ENCODE measurements at regions of chr3 and their contacts with region 1.

Region 1: DNA sequence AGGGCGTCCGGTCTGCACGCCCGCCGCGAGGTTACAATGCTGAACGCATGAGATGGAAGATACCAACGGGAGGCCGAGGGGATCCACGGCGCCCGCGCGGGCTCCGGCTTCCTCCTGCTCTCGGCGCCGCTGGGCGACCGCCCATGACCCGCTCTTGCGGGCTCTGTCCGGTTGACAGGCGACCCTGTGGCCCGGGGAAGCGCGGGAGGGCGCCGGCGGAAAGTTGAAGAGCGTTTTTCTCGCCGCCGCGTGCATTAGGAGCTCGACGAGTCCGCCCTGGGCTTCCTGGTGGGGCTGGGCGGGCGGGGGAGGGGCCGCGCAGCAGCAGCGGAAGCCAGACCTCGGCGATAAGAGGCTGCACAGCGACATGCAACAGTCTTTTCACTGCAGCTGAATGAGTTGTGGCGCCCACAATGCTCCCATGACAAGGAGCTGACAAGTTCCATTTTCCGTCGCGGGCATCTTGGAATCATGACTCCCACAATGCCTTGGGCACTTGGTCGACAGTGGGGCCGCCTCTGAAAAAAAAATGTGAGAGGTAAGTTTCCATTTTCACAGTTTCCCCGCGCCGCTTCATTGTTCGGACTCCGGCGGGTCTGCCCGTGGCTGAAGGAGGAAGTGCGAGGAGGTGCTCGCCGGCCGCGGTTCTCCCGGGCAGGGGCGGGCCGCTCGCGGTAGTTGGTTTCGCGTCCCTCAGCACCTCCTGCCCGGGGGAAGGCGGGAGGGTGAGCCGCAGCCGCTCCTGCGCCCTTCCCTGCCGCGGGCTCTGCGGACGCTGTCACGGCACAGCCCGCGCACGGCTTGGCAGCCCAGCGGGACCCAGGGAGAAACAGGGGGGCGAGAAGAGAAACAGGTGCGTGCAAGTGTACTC is at the start of gene MBNL1:
- DNase-seq: peak; percentile 83 to 89 (median 87)
- ATAC-seq: peak; percentile 26 to 81 (median 76)
- H3K4me3 ChIP-seq: peak within 1 kb of the TSS; percentile 66 to 93 (median 84)
- H3K27ac ChIP-seq: peak within 1 kb of the TSS; percentile 92 to 100 (median 99)
- H3K4me1 ChIP-seq: peaks cover 14 to 72% (median 48%) of the 10 kb centered on the region in 12 donors
- H3K27me3 ChIP-seq: no peaks in the 10 kb centered on the region
- CTCF ChIP-seq: no peak
- POLR2A ChIP-seq: peak in 1 of 2 donors; percentile 57
- total RNA-seq, gene MBNL1: 156 to 416 (median 193) TPM

Region 2: GRCh38 chr3:152183473-152183872 is 85.3 kb before region 1 on chr3:
- intact Hi-C with region 1: loop called in 3 of 10 experiments (anchors 5 to 10 kb)
- DNase-seq: peak in 4 of 5 donors; percentile 30 to 53 (median 39)
- ATAC-seq: peak; percentile 58 to 83 (median 66)
- H3K4me3 ChIP-seq: no peak overlapping the region
- H3K27ac ChIP-seq: no peak overlapping the region
- H3K4me1 ChIP-seq: peaks cover 0 to 10% (median 0%) of the 10 kb centered on the region in 12 donors
- H3K27me3 ChIP-seq: no peaks in the 10 kb centered on the region
- CTCF ChIP-seq: peak; percentile 45 to 78 (median 62)
- POLR2A ChIP-seq: no peak

Region 3: DNA sequence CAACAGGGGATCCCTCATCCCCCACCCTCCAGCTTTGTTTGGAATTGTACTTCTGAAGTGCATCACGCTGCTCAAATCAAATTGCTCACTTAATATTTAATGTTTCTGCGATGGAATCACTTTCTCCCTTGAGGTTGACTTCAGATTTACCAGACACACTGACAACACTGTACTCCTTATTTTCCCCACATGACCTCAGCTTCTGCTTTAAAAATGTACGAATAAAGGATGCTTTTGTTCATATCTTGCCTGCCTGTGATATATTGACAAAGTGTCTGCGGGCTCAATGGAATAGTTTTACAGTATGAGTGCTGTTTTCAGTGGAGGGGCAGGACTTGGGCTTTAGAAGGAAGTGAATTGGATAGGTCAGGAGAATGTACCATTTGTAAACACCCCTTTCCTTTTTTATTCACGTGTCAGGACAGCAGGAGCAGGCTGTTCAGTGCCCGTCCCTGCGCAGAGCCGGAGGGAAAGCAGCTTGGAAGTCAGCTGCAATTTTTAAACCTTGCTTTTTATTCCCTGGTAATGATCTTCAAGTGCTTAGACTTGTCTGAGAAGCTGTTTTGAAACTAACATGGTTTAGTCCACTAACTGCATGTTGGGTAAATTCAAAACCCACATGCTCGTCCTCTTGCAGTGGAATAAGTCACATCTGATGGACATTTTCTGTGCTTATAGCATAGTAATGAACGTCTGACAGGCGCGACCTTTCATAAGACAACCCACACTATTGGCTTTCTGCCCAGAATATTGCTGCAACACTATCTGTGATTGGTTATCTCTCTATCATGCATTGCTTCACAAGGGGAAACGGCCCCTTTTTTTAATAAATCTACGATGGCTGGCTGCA is 29.8 kb after region 1 on chr3:
- intact Hi-C with region 1: loop called in 3 of 10 experiments (anchors 2 to 5 kb)
- DNase-seq: peak; percentile 40 to 60 (median 52)
- ATAC-seq: peak; percentile 80 to 88 (median 84)
- H3K4me3 ChIP-seq: peak overlapping the region in 11 of 12 donors; percentile 16 to 59 (median 47)
- H3K27ac ChIP-seq: peak overlapping the region; percentile 35 to 91 (median 82)
- H3K4me1 ChIP-seq: peaks cover 7 to 99% (median 68%) of the 10 kb centered on the region in 12 donors
- H3K27me3 ChIP-seq: no peaks in the 10 kb centered on the region
- CTCF ChIP-seq: no peak
- POLR2A ChIP-seq: no peak

Region 4: DNA sequence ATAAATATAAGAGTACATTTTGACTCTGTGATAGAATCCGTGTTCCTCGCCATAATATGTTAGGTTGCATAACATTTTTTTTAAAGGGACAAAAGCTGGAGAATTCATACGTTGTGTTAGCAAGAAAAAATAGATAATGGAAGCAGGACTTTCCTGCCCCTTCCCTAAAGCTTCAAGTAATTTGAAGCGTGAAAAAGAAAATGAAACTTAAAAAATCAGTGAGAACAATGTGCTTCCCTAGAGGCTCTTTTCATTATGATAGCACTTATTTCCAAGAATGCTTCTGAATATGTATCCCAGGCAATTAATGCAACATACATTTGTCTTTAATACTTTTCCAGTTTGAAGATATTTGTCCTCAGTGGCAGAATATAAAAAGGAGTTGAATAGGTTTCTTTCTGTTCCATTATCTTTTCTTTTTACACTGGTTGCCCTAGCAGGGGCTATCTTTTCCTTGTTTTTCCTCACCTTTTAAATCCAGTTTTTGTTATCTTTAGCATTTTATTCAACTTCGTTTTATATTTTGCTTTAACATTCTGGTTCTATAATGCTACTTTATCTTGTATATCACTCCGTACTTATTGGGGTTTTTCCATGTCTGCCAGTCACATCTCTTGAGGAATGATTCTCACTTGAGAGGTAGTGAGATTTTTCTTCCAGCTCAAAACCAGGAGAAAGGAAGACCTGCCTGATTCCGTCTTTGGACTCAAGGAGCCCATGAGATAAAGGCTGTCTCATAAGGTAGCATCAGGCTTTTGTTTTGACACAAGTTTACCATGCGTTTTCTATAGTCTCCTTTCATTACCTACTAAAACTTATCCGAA is 113.7 kb after region 1 on chr3:
- intact Hi-C with region 1: loop called in 1 of 10 experiments (anchors 5 kb)
- DNase-seq: no peak
- ATAC-seq: peak in 2 of 4 donors; percentile 32 to 48
- H3K4me3 ChIP-seq: peak overlapping the region in 10 of 12 donors; percentile 3 to 54 (median 36)
- H3K27ac ChIP-seq: peak overlapping the region; percentile 23 to 81 (median 72)
- H3K4me1 ChIP-seq: peaks cover 14 to 98% (median 87%) of the 10 kb centered on the region in 12 donors
- H3K27me3 ChIP-seq: no peaks in the 10 kb centered on the region
- CTCF ChIP-seq: no peak
- POLR2A ChIP-seq: no peak

Region 5: GRCh38 chr3:152430223-152431002 is 161.6 kb after region 1 on chr3:
- intact Hi-C with region 1: loop called in 3 of 10 experiments (anchors 5 to 10 kb)
- DNase-seq: peak in 4 of 5 donors; percentile 39 to 78 (median 62)
- ATAC-seq: peak; percentile 89 to 98 (median 93)
- H3K4me3 ChIP-seq: no peak overlapping the region
- H3K27ac ChIP-seq: peak overlapping the region in 11 of 12 donors; percentile 27 to 72 (median 60)
- H3K4me1 ChIP-seq: peaks cover 0 to 64% (median 29%) of the 10 kb centered on the region in 12 donors
- H3K27me3 ChIP-seq: no peaks in the 10 kb centered on the region
- CTCF ChIP-seq: no peak
- POLR2A ChIP-seq: no peak

Region 6: GRCh38 chr3:152444029-152444641 is 175.3 kb after region 1 on chr3:
- intact Hi-C with region 1: loop called in 8 of 10 experiments (anchors 1 to 10 kb)
- DNase-seq: no peak
- ATAC-seq: peak in 3 of 4 donors; percentile 48 to 68 (median 65)
- H3K4me3 ChIP-seq: no peak overlapping the region
- H3K27ac ChIP-seq: peak overlapping the region in 7 of 12 donors; percentile 7 to 45 (median 26)
- H3K4me1 ChIP-seq: peaks cover 0 to 78% (median 42%) of the 10 kb centered on the region in 12 donors
- H3K27me3 ChIP-seq: no peaks in the 10 kb centered on the region
- CTCF ChIP-seq: peak; percentile 52 to 80 (median 76)
- POLR2A ChIP-seq: no peak